Activated CD8-positive, alpha-beta T cell treated with anti-CD3 and anti-CD28 coated beads for 36 hours (primary cell): ENCODE measurements at regions of chr11 and their contacts with region 1.

Region 1: GRCh38 chr11:59171508-59172322 is at the start of gene DTX4:
- DNase-seq: peak; percentile 94
- ATAC-seq: peak; percentile 90
- H3K4me3 Mint-ChIP-seq: peak within 1 kb of the TSS; percentile 72
- H3K27ac Mint-ChIP-seq: no peak within 1 kb of the TSS
- H3K4me1 Mint-ChIP-seq: peaks cover 9% of the 10 kb centered on the region
- H3K27me3 Mint-ChIP-seq: peaks cover 13% of the 10 kb centered on the region
- CTCF ChIP-seq: peak; percentile 86
- total RNA-seq, gene DTX4: 0.16 to 0.29 TPM

Region 2: GRCh38 chr11:58963528-58964104 is 208.1 kb before region 1 on chr11:
- CTCF ChIA-PET with region 1: no interaction called
- POLR2A ChIA-PET with region 1: no interaction called
- intact Hi-C with region 1: no loop called
- DNase-seq: no peak
- ATAC-seq: no peak
- H3K4me3 Mint-ChIP-seq: no peak overlapping the region
- H3K27ac Mint-ChIP-seq: no peak overlapping the region
- H3K4me1 Mint-ChIP-seq: no peaks in the 10 kb centered on the region
- H3K27me3 Mint-ChIP-seq: peaks cover 3% of the 10 kb centered on the region
- CTCF ChIP-seq: no peak

Region 3: DNA sequence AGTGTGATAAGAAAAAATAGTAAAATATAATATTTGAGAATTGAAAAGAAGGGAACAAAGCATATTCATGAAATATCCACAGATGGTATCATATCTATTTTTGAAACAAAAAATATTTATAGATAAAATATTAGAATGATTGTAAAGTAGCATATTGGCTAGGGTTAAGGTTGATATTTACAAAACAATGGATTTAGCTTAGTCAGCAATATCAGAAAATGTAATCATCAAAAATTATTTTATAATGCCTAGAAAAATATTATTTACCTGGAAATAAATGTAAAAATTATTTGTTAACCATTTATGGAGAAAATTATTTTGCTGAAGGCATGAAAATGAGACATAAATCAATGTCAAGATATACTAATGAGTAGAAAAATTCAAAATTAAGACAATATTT is 51.9 kb before region 1 on chr11:
- CTCF ChIA-PET with region 1: no interaction called
- POLR2A ChIA-PET with region 1: no interaction called
- intact Hi-C with region 1: no loop called
- DNase-seq: no peak
- ATAC-seq: no peak
- H3K4me3 Mint-ChIP-seq: no peak overlapping the region
- H3K27ac Mint-ChIP-seq: no peak overlapping the region
- H3K4me1 Mint-ChIP-seq: no peaks in the 10 kb centered on the region
- H3K27me3 Mint-ChIP-seq: no peaks in the 10 kb centered on the region
- CTCF ChIP-seq: no peak

Region 4: GRCh38 chr11:59142530-59143507 is 28.9 kb before region 1 on chr11 and contains the start of gene FAM111A:
- CTCF ChIA-PET with region 1: interaction called, 11 read pairs
- POLR2A ChIA-PET with region 1: no interaction called
- intact Hi-C with region 1: no loop called
- DNase-seq: peak; percentile 87
- ATAC-seq: peak; percentile 79
- H3K4me3 Mint-ChIP-seq: peak within 1 kb of the TSS; percentile 93
- H3K27ac Mint-ChIP-seq: peak within 1 kb of the TSS; percentile 93
- H3K4me1 Mint-ChIP-seq: peaks cover 47% of the 10 kb centered on the region
- H3K27me3 Mint-ChIP-seq: no peaks in the 10 kb centered on the region
- CTCF ChIP-seq: no peak
- total RNA-seq, gene FAM111A: 71.8 to 74.5 TPM

Region 5: GRCh38 chr11:59186130-59186594 is 14.4 kb after region 1 on chr11:
- CTCF ChIA-PET with region 1: interaction called, 180 read pairs
- POLR2A ChIA-PET with region 1: interaction called, 3 read pairs
- intact Hi-C with region 1: no loop called
- DNase-seq: peak; percentile 65
- ATAC-seq: peak; percentile 89
- H3K4me3 Mint-ChIP-seq: no peak overlapping the region
- H3K27ac Mint-ChIP-seq: no peak overlapping the region
- H3K4me1 Mint-ChIP-seq: peaks cover 2% of the 10 kb centered on the region
- H3K27me3 Mint-ChIP-seq: peaks cover 2% of the 10 kb centered on the region
- CTCF ChIP-seq: peak; percentile 78

Region 6: GRCh38 chr11:59197991-59198390 is 26.3 kb after region 1 on chr11:
- CTCF ChIA-PET with region 1: interaction called, 72 read pairs
- POLR2A ChIA-PET with region 1: interaction called, 5 read pairs
- intact Hi-C with region 1: no loop called
- DNase-seq: no peak
- ATAC-seq: no peak
- H3K4me3 Mint-ChIP-seq: no peak overlapping the region
- H3K27ac Mint-ChIP-seq: no peak overlapping the region
- H3K4me1 Mint-ChIP-seq: peaks cover 16% of the 10 kb centered on the region
- H3K27me3 Mint-ChIP-seq: peaks cover 3% of the 10 kb centered on the region
- CTCF ChIP-seq: no peak

Region 7: DNA sequence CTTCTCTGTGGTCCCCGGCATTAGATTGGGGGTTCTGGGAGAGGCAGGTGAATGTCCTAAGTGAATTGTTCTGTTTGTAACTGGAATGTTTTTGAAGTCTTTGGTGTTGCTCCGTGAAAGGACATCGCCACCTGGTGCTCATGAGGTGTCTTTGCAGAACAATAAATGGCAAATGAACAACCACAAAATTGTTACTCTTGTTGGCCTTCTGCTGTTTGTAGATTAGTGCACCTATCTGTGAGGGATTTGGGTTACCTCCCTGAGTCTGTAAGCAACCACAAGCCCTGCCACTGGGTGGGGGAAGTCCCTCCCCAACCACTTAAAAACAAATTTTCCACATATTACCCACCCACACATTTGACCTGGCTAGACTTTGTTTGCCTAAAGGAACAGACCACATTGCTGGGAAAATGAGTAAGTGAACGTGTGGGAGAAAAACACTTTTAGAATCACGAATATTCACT is 36.3 kb after region 1 on chr11:
- CTCF ChIA-PET with region 1: interaction called, 72 read pairs
- POLR2A ChIA-PET with region 1: no interaction called
- intact Hi-C with region 1: loop called (anchors 2 kb)
- DNase-seq: peak; percentile 50
- ATAC-seq: peak; percentile 84
- H3K4me3 Mint-ChIP-seq: no peak overlapping the region
- H3K27ac Mint-ChIP-seq: peak overlapping the region; percentile 34
- H3K4me1 Mint-ChIP-seq: peaks cover 26% of the 10 kb centered on the region
- H3K27me3 Mint-ChIP-seq: peaks cover 11% of the 10 kb centered on the region
- CTCF ChIP-seq: peak; percentile 71

Region 8: GRCh38 chr11:59283825-59284772 is 112.4 kb after region 1 on chr11:
- CTCF ChIA-PET with region 1: interaction called, 14 read pairs
- POLR2A ChIA-PET with region 1: no interaction called
- intact Hi-C with region 1: loop called (anchors 5 kb)
- DNase-seq: peak; percentile 66
- ATAC-seq: peak; percentile 87
- H3K4me3 Mint-ChIP-seq: peak overlapping the region; percentile 36
- H3K27ac Mint-ChIP-seq: no peak overlapping the region
- H3K4me1 Mint-ChIP-seq: peaks cover 10% of the 10 kb centered on the region
- H3K27me3 Mint-ChIP-seq: peaks cover 11% of the 10 kb centered on the region
- CTCF ChIP-seq: peak; percentile 73

Region 9: GRCh38 chr11:59429924-59430516 is 258.3 kb after region 1 on chr11:
- CTCF ChIA-PET with region 1: interaction called, 39 read pairs
- POLR2A ChIA-PET with region 1: no interaction called
- intact Hi-C with region 1: loop called (anchors 2 kb)
- DNase-seq: peak; percentile 49
- ATAC-seq: peak; percentile 86
- H3K4me3 Mint-ChIP-seq: no peak overlapping the region
- H3K27ac Mint-ChIP-seq: no peak overlapping the region
- H3K4me1 Mint-ChIP-seq: no peaks in the 10 kb centered on the region
- H3K27me3 Mint-ChIP-seq: peaks cover 7% of the 10 kb centered on the region
- CTCF ChIP-seq: peak; percentile 89